Lower leg skin (tissue), 4 donors: ENCODE measurements at regions of chr20 and their contacts with region 1.

Region 1: DNA sequence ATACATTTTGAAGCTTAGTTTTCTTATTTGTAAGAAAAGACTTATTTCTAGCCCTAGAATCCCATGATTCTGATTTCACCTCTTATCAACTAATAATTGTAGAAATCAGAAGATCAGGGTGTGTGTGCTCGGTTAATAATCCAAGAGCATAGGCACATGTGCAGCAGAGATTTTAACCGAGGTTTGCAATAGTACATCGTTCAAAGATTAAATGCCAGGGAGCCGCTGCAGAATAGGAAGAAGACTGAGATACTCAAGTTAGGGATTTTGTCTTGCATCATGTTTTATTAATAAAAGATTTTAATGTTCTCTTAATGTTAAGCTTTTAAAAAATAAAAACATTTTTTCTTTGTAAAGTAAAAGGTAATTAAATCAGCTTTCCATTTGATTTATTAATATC is 6.9 kb downstream of the STX16 start:
- DNase-seq: no peak
- H3K4me3 ChIP-seq: no peak overlapping the region
- CTCF ChIP-seq: no peak
- POLR2A ChIP-seq: no peak

Region 2: GRCh38 chr20:58685988-58686387 is 28.0 kb after region 1 on chr20:
- intact Hi-C with region 1: loop called (anchors 1 kb)
- DNase-seq: peak in 1 of 2 donors; percentile 53
- H3K4me3 ChIP-seq: no peak overlapping the region
- CTCF ChIP-seq: no peak
- POLR2A ChIP-seq: no peak